Thyroid gland (tissue), 4 donors: ENCODE measurements at regions of chr3 and their contacts with region 1.

Region 1: GRCh38 chr3:38136777-38137614 is at the start of gene ACAA1:
- DNase-seq: peak; percentile 100
- H3K4me3 ChIP-seq: peak within 1 kb of the TSS; percentile 87 to 93 (median 92)
- H3K27ac ChIP-seq: peak within 1 kb of the TSS; percentile 49 to 94 (median 89)
- H3K4me1 ChIP-seq: peaks cover 43 to 51% of the 10 kb centered on the region in 2 donors
- H3K27me3 ChIP-seq: no peaks in the 10 kb centered on the region
- CTCF ChIP-seq: peak in 1 of 6 experiments; percentile 13
- POLR2A ChIP-seq: peak; percentile 50 to 95
- total RNA-seq, gene ACAA1: 63.3 to 86.1 (median 75.1) TPM

Region 2: DNA sequence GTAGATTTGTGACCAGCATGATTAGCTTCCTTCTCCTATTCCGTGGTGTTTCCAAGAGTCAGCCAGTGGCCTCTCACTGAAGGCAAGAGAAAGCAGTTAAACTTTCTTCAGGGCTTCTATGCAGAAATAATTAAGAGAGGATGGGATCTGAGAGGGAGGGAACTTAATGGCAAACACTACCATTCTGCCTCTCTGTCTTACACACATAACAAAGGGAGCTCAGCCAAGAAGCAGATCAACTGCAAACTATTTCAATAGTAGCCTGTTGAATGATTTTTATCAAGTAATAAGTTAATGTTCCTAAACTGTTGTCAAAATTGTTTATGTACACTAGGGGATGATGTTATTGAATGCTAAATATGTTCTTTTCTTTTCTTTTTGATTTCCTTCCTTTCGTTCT is 40.2 kb after region 1 on chr3:
- intact Hi-C with region 1: loop called (anchors 5 kb)
- DNase-seq: no peak
- H3K4me3 ChIP-seq: no peak overlapping the region
- H3K27ac ChIP-seq: no peak overlapping the region
- H3K4me1 ChIP-seq: peaks cover 2 to 8% of the 10 kb centered on the region in 2 donors
- H3K27me3 ChIP-seq: no peaks in the 10 kb centered on the region
- CTCF ChIP-seq: no peak
- POLR2A ChIP-seq: no peak

Region 3: GRCh38 chr3:38346587-38347410 is 209.8 kb after region 1 on chr3 and contains the start of gene XYLB:
- intact Hi-C with region 1: loop called (anchors 10 kb)
- DNase-seq: peak; percentile 82 to 86
- H3K4me3 ChIP-seq: peak within 1 kb of the TSS; percentile 35 to 85 (median 61)
- H3K27ac ChIP-seq: no peak within 1 kb of the TSS
- H3K4me1 ChIP-seq: peaks cover 0 to 11% of the 10 kb centered on the region in 2 donors
- H3K27me3 ChIP-seq: no peaks in the 10 kb centered on the region
- CTCF ChIP-seq: peak; percentile 38 to 96 (median 77)
- POLR2A ChIP-seq: no peak
- total RNA-seq, gene XYLB: 0.78 to 1.7 (median 1.1) TPM